Head of caudate nucleus (tissue), 42 donors: ENCODE measurements at regions of chr2 and their contacts with region 1.

Region 1: GRCh38 chr2:10688921-10689807 is 611 bp downstream of the NOL10 start:
- DNase-seq: peak in 10 of 42 donors; percentile 5 to 40 (median 16)

Region 2: DNA sequence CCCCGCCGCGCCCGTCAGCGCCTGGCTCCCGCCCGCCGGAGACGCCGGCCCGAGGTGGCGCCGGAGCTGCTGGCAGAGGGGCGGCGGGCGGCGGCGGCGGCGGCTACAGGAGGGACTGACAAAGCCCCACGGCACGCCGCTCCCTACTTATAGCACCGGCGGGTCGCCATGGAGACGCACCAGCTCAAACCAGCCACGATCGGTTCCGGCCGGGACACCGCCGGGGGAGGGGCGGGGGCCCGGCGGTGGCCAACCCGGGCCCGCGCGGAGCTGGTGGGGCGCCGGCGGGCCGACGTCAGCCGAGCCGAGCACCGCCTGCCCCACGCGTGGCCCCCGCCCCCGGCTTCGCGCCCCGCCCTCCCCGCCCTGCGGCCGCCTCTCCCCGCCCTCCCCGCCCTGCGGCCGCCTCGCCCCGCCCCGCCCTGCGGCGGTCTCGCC is 240.9 kb before region 1 on chr2 and contains the start of gene ODC1:
- intact Hi-C with region 1: loop called (anchors 10 kb)
- DNase-seq: peak; percentile 84 to 98 (median 92)

Region 3: DNA sequence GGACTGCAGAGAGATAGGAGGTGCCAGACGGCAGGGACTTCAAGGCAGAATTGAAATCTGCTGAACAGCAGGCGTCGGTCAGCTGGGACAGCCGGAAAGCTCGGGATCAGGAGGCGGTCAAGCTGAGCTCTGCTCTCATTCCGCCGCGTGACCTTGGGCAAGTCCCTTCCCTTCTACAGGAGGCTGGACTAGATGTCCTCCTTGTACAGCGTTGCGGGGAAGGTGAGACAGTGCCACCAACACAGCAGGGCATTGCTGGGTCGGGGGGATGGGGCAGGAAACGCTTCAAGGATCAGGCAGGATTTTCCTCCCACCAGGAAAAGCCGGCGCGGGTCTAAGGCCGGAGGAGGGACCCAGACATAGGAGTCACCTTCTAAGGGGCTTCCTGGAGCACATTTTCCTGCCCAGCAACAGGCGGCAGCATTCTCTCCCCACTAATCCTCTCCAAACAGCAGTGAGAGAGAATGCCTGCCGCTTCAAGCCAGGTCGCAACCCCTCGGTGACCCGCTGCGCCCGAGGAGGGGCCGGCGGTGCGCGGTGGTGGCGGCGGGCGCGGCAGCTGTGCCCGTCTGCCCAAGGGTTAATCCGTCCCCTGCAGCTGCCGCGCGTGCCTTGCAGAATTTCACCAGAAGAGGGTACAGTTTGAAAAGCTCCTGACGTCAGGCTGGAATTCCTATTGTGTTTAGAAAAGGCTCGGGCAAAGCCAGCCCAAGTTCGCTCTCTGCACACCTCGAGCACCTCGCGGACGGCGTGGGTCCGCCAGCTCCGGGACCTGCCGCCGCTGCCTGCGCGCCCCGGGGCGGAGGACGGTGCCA is 222.3 kb after region 1 on chr2 and contains the start of gene KCNF1:
- intact Hi-C with region 1: no loop called
- DNase-seq: peak in 17 of 42 donors; percentile 19 to 78 (median 57)